ENCODE measurements at regions of chr6 and their contacts with region 1.

Region 1: DNA sequence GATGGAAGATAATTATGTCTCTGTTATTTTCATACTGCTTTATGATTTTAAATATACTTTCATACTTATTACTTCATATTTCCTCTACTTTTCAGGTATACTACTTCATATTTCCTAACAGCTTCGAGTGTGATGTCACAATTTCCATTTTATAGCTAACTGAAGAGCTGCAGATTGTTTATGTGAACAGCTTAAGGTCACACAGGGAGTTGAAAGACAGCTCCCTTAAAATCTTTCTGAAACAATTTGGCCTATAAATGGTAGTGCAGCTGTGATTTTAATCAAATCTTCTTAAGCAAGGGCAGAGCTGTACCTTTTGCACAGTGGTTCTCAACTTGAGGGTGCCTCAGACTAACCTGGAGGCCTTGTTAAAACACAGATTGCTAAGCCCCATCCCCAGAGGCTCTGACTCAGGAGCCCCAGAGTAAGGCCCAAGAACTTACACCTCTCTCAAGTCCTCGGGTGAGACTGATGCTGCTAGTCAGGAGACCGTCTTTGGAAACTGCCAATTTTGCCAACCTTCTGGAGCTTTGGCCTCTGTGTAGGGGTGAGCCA is 347.0 kb upstream of the HSF2 start:
- DNase-seq: no peak
- ATAC-seq: peak; percentile 26

Region 2: DNA sequence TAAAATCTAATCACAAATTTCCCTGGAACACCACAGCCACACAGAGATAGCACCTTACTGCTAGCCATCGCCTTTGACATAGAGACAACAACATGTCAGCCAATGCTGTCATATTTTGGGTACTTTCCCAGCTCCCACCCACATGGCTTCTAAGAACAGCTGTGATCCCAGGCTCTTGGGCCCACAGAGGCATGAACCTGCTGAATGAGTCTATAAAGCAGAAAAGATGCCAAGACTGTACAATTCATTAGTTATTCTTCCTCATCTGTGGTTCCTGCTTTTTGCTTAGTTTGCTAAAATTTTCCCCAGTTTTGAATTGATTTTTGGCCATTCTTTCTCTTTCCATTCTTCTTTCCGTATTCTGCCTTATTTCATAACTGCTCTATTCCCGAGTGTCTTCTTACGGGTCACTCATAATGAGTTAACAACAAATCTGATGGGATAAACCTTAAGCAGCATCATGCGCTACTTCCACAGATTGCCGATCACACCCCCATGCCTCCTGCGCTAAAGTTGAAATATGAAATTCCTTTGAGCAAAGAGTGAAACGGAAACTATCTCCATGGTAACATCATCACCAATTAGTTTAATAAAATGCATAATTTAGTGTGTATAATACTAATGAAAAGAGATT is 19.7 kb after region 1 on chr6:
- intact Hi-C with region 1: loop called (anchors 1 kb)
- DNase-seq: no peak
- ATAC-seq: peak; percentile 84